ENCODE measurements at regions of chr13 and their contacts with region 1.

Region 1: DNA sequence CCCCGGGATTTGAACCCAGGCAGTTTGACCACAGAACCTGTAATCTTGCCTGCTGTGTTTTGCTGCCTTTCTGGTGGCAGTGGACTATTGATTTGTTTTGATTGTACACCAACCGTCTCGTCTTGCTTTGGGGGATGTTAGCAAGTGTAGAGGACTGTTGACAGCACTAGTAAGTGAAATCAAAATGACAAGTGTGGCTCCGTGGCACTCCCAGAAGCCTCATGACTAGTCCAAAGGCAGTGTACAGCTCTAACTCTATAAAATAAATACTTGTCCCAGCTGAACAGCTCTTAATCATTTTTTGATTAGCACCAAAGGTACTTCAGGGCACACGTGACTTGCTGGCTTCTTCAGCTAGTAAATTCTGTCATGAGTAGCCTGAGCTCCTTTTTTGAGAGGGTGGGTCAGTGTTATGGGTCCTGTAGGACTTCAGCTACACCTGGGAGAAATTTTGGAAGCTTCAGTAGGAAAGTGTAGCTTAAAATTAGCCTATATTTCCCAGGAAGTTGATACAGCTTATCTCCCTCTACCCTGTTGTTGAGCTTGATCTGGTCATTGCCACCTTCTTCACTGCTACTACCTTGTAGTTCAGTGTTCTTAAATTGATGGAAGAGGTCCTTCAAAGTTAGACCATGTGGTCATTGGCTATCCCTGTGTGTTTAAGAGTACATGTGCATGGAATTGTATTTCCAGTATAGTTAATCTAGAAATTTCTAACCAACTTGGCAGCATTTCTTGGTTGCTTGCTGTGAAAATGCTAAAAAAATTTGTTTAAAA is 15.1 kb downstream of the TM9SF2 start:
- DNase-seq: no peak
- H3K4me3 ChIP-seq: no peak overlapping the region
- H3K27ac ChIP-seq: no peak overlapping the region
- H3K4me1 ChIP-seq: peaks cover 4% of the 10 kb centered on the region
- H3K27me3 ChIP-seq: no peaks in the 10 kb centered on the region
- CTCF ChIP-seq: no peak
- EP300 ChIP-seq: no peak
- POLR2A ChIP-seq: no peak

Region 2: GRCh38 chr13:99606324-99607066 is 90.2 kb after region 1 on chr13:
- intact Hi-C with region 1: loop called in 1 of 4 experiments (anchors 10 kb)
- DNase-seq: peak; percentile 84 to 93 (median 93)
- H3K4me3 ChIP-seq: peak within 1 kb of the TSS; percentile 83
- H3K27ac ChIP-seq: peak within 1 kb of the TSS in 1 of 2 donors; percentile 43
- H3K4me1 ChIP-seq: no peaks in the 10 kb centered on the region
- H3K27me3 ChIP-seq: no peaks in the 10 kb centered on the region
- CTCF ChIP-seq: peak in 1 of 3 donors; percentile 31
- EP300 ChIP-seq: no peak
- POLR2A ChIP-seq: peak; percentile 49